Activated T-helper 2 cell treated with anti-CD3 and anti-CD28 coated beads, Interferon-gamma antibody, Interleukin-2, Interleukin-4, amounts not matched to agents 10 μg/mL and 5 μg/mL and 100 μg/mL, durations not matched to agents 14 hours and 24 hours and 36 hours (primary cell): ENCODE measurements at regions of chr7 and their contacts with region 1.

Region 1: GRCh38 chr7:141975806-141976523 is 2.4 kb upstream of the TAS2R38 start:
- DNase-seq: peak; percentile 45
- H3K4me3 Mint-ChIP-seq: peak overlapping the region; percentile 66
- H3K27ac Mint-ChIP-seq: no peak overlapping the region
- H3K4me1 Mint-ChIP-seq: peaks cover 7% of the 10 kb centered on the region
- H3K27me3 Mint-ChIP-seq: no peaks in the 10 kb centered on the region

Region 2: DNA sequence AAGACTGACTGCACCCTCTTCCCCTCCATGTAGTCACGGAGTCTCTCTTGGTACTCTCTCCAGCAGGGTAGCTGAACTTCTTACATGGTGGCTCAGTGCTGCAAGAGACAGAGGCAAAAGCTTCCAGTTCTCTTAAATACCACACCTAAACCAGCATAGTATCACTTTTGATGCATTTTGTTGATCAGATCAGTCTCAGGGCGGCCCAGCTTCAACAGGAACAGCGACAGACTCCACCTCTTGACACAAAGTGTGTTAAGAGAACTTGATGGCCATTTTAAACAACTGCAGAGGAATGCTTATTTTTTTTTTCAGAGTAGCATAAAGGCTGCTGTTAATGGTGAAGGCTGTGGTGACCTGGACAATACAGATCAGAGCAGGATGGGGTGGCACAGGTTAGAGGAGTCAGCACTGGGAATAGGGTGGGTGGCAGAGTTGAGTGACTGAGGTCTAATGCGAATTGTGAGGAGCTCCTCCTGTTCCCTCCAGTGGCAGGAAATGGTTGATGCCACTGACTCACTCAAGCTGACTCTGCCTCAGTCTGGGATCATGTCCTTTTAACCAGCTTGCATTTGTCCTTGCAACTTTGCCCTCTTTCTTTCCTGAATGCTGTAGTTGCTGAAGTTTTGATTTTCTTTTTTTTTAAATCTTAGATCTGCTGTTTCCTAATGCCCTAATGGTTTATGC is 37.0 kb after region 1 on chr7:
- intact Hi-C with region 1: no loop called
- DNase-seq: no peak
- H3K4me3 Mint-ChIP-seq: no peak overlapping the region
- H3K27ac Mint-ChIP-seq: no peak overlapping the region
- H3K4me1 Mint-ChIP-seq: no peaks in the 10 kb centered on the region
- H3K27me3 Mint-ChIP-seq: peaks cover 5% of the 10 kb centered on the region

Region 3: DNA sequence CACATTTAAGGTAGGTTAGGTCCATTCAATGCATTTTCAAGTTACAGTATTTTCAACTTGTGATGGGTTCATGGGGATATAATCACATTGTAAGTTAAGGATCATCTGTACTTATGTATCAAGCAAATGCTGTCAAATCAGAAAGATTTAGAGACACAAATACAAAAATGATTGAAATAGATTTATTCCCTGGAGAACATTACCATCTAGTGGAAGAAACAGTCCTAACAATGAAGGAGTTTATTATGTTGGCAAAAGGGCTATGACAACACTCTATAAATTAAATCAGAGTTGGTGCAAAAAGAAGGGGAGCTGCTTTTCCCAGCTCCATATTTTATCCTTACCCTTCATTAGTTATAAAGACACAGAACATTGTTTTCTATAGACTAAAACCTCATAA is 212.9 kb after region 1 on chr7:
- intact Hi-C with region 1: loop called (anchors 2 kb)
- DNase-seq: no peak
- H3K4me3 Mint-ChIP-seq: no peak overlapping the region
- H3K27ac Mint-ChIP-seq: no peak overlapping the region
- H3K4me1 Mint-ChIP-seq: peaks cover 6% of the 10 kb centered on the region
- H3K27me3 Mint-ChIP-seq: peaks cover 49% of the 10 kb centered on the region

Region 4: DNA sequence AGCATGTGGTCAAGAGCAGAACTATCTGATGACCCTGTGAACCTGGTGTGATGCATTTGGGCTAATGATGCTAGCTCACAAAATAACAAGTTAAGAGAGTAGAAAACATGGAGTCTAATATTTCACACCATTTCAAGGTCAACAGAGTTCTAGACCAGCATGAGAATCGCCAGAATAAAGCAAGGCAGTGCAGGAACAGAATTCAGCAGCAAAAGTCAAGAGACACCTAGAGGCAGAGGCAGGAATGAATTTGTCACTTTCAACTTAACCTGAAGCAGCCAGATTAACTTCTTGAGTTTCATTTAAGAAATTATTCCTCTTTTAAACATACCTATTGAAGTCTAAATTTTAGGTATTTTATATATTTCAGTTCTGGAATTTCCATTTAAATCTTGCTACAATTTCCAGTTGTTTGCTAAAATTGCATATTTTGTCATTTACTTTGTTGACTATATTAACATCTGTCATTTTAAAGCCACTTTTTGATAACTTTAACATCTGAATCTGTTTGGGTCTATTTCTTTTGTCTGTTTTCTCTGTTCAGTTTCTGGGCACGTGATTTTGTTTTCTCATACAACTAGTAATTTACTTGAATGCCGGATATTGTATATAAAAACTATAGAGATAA is 326.1 kb after region 1 on chr7:
- intact Hi-C with region 1: loop called (anchors 2 kb)
- DNase-seq: no peak
- H3K4me3 Mint-ChIP-seq: no peak overlapping the region
- H3K27ac Mint-ChIP-seq: no peak overlapping the region
- H3K4me1 Mint-ChIP-seq: peaks cover 1% of the 10 kb centered on the region
- H3K27me3 Mint-ChIP-seq: peaks cover 24% of the 10 kb centered on the region